SK-N-SH (cell line): ENCODE measurements at regions of chr17 and their contacts with region 1.

Region 1: GRCh38 chr17:74305865-74306654 is 20.0 kb upstream of the KIF19 start:
- DNase-seq: no peak
- H3K4me3 ChIP-seq: no peak overlapping the region
- H3K27ac ChIP-seq: no peak overlapping the region
- H3K4me1 ChIP-seq: no peaks in the 10 kb centered on the region
- H3K27me3 ChIP-seq: no peaks in the 10 kb centered on the region
- CTCF ChIP-seq: no peak
- EP300 ChIP-seq: no peak
- RAD21 ChIP-seq: peak; percentile 28; the same call in 1 of the 2 replicates

Region 2: DNA sequence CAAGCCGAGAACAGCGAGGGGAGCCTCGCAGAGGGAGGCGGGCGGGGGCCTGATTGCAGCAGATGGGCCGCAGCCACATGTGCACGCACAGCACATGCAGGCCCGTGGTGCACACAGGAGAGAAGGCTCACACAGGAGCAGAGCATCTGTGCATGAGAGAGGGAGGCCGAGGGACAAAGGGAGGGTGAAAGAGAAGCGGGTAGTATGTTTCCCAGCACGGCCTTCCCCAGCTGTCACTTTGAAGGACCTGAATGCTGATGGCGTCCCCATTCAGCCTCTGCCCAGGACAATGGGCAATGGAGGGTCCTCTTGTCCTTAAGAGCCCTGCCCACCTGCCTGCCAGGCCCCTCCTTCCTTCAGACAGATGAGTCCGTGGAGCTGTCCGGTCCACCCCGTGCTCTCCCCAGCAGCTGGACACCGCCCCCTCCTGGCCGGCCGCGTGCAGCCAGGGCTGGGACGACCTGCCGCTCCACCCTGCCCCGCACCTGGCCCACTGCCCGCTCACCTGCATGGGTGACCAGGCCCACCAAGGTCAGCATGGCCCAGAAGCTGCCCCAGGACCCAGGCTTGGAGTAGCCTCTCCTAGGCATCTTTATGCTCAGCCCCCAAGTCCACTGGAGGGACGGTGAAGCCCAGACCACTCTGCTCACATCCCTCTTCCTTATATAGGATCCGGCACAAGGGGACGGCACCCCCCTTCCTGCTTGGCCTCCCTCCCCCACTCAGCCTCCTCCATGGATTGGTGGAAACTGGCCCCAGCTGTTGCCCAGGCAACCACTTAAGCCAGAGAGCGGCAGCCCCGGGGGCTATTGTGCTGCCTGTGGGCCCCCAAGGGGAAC is 55.4 kb after region 1 on chr17 and contains the start of gene BTBD17:
- CTCF ChIA-PET with region 1: interaction called, 14 read pairs
- POLR2A ChIA-PET with region 1: no interaction called
- DNase-seq: peak; percentile 78
- H3K4me3 ChIP-seq: peak within 1 kb of the TSS in 1 of 2 experiments; percentile 49; a peak in 1 of 4 replicates
- H3K27ac ChIP-seq: no peak within 1 kb of the TSS
- H3K4me1 ChIP-seq: no peaks in the 10 kb centered on the region; a peak in 1 of 4 replicates
- H3K27me3 ChIP-seq: no peaks in the 10 kb centered on the region
- CTCF ChIP-seq: no peak
- EP300 ChIP-seq: no peak
- RAD21 ChIP-seq: peak; percentile 40
- polyA plus RNA-seq, gene BTBD17: not detected in 2 replicates